HepG2 (cell line): ENCODE measurements at regions of chr5 and their contacts with region 1.

Region 1: DNA sequence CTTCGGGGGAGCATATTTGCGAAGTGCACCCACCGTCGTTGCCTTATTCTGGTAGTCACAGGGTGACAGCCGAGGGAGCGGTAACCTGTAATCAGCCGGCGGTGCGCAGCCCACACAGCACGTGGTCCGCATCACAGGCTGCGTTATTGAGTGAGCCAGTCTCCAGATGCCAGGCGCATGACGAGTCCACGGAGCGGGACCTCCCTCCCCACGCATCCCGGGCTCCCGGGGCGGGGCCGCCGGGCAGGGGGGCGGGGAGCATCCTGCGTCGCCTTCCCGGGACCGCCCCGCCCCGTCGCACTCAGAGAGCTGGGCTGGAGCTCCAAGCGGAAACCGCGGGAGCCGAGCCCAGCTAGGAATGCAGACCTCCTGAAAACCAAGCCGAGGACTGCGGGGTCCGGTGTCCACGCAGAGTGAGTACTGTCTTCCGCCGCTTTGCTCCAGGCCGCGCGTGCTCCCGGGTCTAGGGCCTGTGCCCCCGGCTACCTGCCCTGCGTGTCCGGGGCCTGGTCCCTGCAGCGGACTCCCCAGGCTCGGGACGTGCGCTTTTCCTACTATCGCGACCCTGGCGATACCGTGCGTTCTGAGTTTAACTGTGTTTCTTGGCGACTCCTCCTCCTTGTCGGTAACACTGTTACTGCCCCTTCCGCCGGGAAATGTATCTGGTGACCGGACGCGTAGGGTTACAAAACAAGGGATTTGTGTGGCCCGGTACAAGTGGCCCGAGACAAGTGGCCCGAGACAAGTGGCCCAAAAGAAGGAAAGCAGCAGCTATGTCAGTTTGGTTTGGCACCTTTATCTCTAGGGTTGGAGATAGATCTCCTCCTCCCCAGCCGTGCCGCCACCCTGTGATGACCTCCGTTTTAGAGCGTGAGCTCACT is 40.6 kb downstream of the CAST start:
- DNase-seq: peak; percentile 70
- ATAC-seq: peak; percentile 95
- H3K4me3 ChIP-seq: peak overlapping the region; percentile 70 to 87 (median 83)
- H3K27ac ChIP-seq: peak overlapping the region; percentile 83
- H3K4me1 ChIP-seq: peaks cover 20% of the 10 kb centered on the region
- H3K27me3 ChIP-seq: no peaks in the 10 kb centered on the region; a peak in 1 of 5 replicates
- CTCF ChIP-seq: no peak
- EP300 ChIP-seq: no peak
- POLR2A ChIP-seq: peak; percentile 67 to 70
- RAD21 ChIP-seq: peak; percentile 24; the same call in 1 of the 2 replicates

Region 2: GRCh38 chr5:96079075-96079474 is 623.7 kb before region 1 on chr5:
- CTCF ChIA-PET with region 1: no interaction called
- POLR2A ChIA-PET with region 1: no interaction called
- in situ Hi-C with region 1: no loop called
- intact Hi-C with region 1: no loop called
- DNase-seq: peak; percentile 35
- ATAC-seq: no peak
- H3K4me3 ChIP-seq: no peak overlapping the region
- H3K27ac ChIP-seq: no peak overlapping the region
- H3K4me1 ChIP-seq: peaks cover 37% of the 10 kb centered on the region
- H3K27me3 ChIP-seq: no peaks in the 10 kb centered on the region
- CTCF ChIP-seq: no peak
- EP300 ChIP-seq: no peak
- POLR2A ChIP-seq: no peak
- RAD21 ChIP-seq: no peak

Region 3: GRCh38 chr5:96662725-96663513 is 39.8 kb before region 1 on chr5:
- CTCF ChIA-PET with region 1: no interaction called
- POLR2A ChIA-PET with region 1: interaction called, 4 read pairs
- in situ Hi-C with region 1: no loop called
- intact Hi-C with region 1: loop called (anchors 5 kb)
- DNase-seq: peak; percentile 69
- ATAC-seq: peak; percentile 82
- H3K4me3 ChIP-seq: peak overlapping the region; percentile 87 to 94 (median 94)
- H3K27ac ChIP-seq: peak overlapping the region; percentile 59
- H3K4me1 ChIP-seq: peaks cover 28% of the 10 kb centered on the region
- H3K27me3 ChIP-seq: no peaks in the 10 kb centered on the region; a peak in 2 of 5 replicates
- CTCF ChIP-seq: no peak
- EP300 ChIP-seq: no peak
- POLR2A ChIP-seq: peak; percentile 27 to 42; a peak in 1 of 4 replicates
- RAD21 ChIP-seq: no peak

Region 4: GRCh38 chr5:96714951-96715451 is 12.3 kb after region 1 on chr5:
- CTCF ChIA-PET with region 1: no interaction called
- POLR2A ChIA-PET with region 1: interaction called, 18 read pairs
- in situ Hi-C with region 1: no loop called
- intact Hi-C with region 1: no loop called
- DNase-seq: peak; percentile 96
- ATAC-seq: peak; percentile 97
- H3K4me3 ChIP-seq: peak overlapping the region in 2 of 3 experiments; percentile 20 to 23; a peak in 2 of 6 replicates
- H3K27ac ChIP-seq: peak overlapping the region; percentile 95
- H3K4me1 ChIP-seq: peaks cover 49% of the 10 kb centered on the region
- H3K27me3 ChIP-seq: no peaks in the 10 kb centered on the region
- CTCF ChIP-seq: no peak
- EP300 ChIP-seq: peak; percentile 83 to 94
- POLR2A ChIP-seq: no peak
- RAD21 ChIP-seq: no peak